ENCODE measurements at regions of chr9 and their contacts with region 1.

Region 1: GRCh38 chr9:128653941-128654340 is 2.7 kb downstream of the DYNC2I2 start:
- DNase-seq: no peak
- H3K4me3 ChIP-seq: no peak overlapping the region
- H3K27me3 ChIP-seq: no peaks in the 10 kb centered on the region
- CTCF ChIP-seq: no peak

Region 2: DNA sequence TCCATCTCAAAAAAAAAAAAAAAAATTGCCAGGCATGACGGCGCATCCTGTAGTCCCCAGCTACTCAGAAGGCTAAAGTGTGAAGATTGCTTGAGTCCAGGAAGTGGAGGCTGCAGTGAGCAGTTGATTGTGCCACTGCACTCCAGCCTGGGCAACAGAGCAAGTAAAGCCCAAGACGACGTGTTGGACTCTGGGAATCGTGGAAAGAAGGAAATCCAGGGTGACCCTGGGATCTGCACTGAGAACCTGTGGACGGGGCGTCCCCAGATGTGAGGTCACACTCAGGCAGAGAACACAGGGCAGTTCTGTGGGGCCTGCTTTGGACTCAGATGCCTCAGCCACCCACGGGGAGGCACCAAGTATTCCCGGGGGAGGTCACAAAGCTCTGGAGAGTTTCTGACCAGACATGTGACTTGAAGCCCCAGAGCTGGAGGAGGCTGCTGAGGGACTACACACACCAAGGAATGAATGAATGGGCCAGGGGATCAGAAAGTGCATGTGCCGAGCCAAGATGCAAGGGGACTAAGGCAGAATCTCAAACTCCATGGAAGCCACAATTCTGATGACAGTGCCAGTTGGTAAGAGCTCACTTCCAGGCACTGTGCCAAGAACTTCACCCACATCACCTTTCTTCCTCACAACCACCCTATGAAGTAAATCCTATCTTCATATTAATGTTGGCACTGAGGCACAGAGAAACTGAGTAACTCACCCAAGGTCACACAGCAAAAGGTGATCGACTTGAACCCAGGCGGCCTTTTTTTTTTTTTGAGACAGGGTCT is 10.2 kb before region 1 on chr9:
- CTCF ChIA-PET with region 1: interaction called, 3 read pairs
- POLR2A ChIA-PET with region 1: interaction called, 14 read pairs
- DNase-seq: no peak
- H3K4me3 ChIP-seq: no peak overlapping the region
- H3K27me3 ChIP-seq: no peaks in the 10 kb centered on the region
- CTCF ChIP-seq: no peak

Region 3: GRCh38 chr9:128712451-128713410 is 58.8 kb after region 1 on chr9:
- CTCF ChIA-PET with region 1: no interaction called
- POLR2A ChIA-PET with region 1: no interaction called
- DNase-seq: no peak
- H3K4me3 ChIP-seq: no peak overlapping the region
- H3K27me3 ChIP-seq: no peaks in the 10 kb centered on the region
- CTCF ChIP-seq: no peak